ENCODE measurements at regions of chr15 and their contacts with region 1.

Region 1: DNA sequence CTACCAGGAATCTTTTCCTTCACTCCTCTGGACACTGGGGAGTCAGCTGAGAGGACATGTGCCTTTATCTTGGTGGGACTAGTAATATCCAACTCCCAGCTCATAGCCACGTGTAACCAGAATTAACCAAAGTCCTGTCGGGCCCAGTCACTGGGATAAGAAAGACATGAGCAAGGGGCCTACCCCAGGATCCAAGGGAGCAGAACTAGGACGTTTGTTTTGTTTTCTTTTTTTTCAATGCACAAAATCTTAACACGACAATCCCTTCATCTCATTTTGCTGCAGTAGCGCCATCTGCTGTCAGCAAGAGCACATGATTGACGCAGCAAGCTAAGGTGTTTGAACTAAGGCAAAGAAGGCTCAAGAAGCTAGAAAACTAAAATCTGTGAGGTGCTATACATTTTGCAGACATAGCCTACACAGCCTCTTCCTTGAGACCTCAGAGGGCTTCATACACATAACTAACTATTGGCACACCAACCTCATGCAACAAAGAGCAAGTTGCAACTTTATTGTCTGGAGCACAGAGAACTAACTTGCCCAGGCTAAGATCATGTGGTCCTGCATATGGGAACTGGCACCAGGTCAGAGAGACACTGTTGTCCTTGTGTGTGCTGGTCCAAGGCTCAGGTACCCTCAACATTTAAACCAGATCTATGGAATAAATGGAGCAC is 43.6 kb downstream of the RLBP1 start:
- DNase-seq: peak; percentile 68
- CTCF ChIP-seq: peak; percentile 86

Region 2: GRCh38 chr15:88904624-88905327 is 273.0 kb before region 1 on chr15:
- CTCF ChIA-PET with region 1: interaction called, 23 read pairs
- POLR2A ChIA-PET with region 1: no interaction called
- DNase-seq: peak; percentile 85
- CTCF ChIP-seq: peak; percentile 93

Region 3: GRCh38 chr15:89087830-89088604 is 89.8 kb before region 1 on chr15 and contains the start of gene ABHD2:
- CTCF ChIA-PET with region 1: interaction called, 15 read pairs
- POLR2A ChIA-PET with region 1: no interaction called
- DNase-seq: peak; percentile 94
- CTCF ChIP-seq: no peak

Region 4: GRCh38 chr15:89143503-89144162 is 34.1 kb before region 1 on chr15:
- CTCF ChIA-PET with region 1: interaction called, 10 read pairs
- POLR2A ChIA-PET with region 1: no interaction called
- DNase-seq: no peak
- CTCF ChIP-seq: no peak

Region 5: DNA sequence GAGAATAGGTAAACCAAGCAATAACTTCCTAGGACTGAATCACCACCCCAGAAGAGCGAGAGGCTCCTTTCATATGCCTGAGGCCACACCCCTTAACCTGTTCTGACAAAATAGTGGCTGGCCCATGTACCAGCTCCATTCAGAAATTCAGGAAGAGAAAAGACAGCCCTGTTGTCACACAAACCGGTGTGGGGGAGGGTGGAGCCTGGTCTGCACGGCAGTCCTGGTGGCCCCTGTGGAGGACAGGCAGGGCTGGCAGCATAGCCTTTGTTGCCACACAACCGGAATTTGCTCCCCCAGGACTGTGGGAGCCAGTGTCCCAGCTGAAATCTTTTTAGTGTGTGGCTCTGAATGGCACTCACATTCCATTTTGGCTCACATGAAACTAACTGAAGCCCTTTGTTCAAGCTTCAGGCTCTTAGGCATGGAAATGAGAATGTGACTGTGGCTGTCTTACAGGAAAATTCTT is 19.8 kb after region 1 on chr15:
- CTCF ChIA-PET with region 1: interaction called, 16 read pairs
- POLR2A ChIA-PET with region 1: no interaction called
- DNase-seq: no peak
- CTCF ChIP-seq: no peak

Region 6: DNA sequence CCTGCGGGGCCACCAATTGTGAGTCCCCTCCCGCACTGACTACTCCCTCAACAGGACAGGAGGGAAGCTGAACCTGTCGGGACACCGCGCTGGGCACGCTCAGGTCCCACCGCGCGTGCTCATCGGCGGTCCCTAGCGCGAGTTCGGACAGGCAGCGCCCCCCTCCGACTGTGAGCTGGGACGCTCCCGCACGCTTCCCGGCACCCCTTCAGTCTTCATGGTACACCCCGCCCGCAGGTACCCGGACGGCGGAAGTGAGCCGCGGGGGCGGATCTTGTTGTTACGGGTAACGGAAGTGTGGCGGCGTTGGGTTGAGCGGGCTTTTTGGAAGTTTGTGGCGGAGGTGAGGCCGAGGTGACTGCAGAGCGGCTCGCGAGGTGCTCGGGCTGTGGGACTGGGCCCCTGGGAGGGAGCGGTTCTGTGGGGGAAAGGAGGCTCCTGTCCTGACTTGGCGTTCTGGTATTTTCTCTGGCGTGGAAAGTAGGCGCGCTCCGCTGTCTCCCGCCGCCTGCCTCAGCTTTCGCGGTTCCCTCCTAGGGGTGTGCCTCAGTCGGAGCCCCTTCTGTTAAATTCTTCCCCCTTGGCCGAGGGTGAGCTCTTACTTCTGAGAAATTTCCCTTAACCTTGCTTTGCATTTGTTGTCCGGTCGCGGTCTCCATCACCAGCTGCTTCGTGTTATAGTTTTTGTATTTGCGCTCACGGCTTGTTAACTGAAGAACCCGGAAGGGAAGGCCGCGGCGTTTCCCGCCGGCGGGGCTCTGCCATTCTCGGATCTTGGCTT is 66.1 kb after region 1 on chr15 and contains the start of gene FANCI:
- CTCF ChIA-PET with region 1: no interaction called
- POLR2A ChIA-PET with region 1: no interaction called
- DNase-seq: peak; percentile 95
- CTCF ChIP-seq: peak; percentile 66